BJ (cell line): ENCODE measurements at regions of chr10 and their contacts with region 1.

Region 1: GRCh38 chr10:102476466-102477141 is 25.3 kb upstream of the C10orf95 start:
- DNase-seq: no peak
- H3K4me3 ChIP-seq: no peak overlapping the region
- H3K27me3 ChIP-seq: no peaks in the 10 kb centered on the region
- CTCF ChIP-seq: no peak

Region 2: DNA sequence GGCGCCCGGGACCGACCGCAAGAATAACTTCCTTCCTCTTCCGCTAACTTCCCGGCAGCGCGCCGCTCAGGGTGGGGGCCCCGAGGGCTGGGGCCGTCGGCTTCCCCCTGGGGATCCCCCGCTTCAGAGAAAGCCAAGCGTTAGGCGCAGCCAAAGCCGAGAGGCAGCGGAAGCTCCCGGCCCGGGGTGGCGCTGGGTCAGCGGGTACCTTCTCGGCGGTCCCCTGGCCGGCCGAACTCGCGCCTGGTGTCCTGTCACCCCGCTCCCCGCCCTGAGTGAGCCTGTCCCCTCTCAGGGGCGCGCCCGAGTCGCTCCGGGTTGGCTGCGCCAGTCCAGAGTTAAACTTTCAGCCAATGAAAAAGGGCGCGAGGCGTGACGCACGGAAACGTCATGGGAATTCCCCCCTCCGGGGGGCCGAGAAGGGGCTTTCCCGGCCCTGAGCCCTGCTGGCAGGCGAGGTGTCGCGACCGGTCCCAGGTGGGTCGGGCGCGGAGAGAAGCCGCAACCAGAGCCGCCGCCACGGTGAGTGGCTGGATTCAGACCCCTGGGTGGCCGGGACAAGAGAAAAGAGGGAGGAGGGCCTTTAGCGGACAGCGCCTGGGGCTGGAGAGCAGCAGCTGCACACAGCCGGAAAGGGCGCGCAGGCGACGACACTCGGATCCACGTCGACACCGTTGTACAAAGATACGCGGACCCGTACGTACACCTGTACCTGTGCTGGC is 82.4 kb before region 1 on chr10:
- CTCF ChIA-PET with region 1: interaction called, 32 read pairs
- POLR2A ChIA-PET with region 1: no interaction called
- DNase-seq: peak; percentile 51
- H3K4me3 ChIP-seq: peak overlapping the region; percentile 79
- H3K27me3 ChIP-seq: no peaks in the 10 kb centered on the region
- CTCF ChIP-seq: no peak; the same call in 1 of the 2 replicates

Region 3: GRCh38 chr10:102408728-102409603 is 67.6 kb before region 1 on chr10:
- CTCF ChIA-PET with region 1: interaction called, 14 read pairs
- POLR2A ChIA-PET with region 1: no interaction called
- DNase-seq: no peak
- H3K4me3 ChIP-seq: peak overlapping the region; percentile 21
- H3K27me3 ChIP-seq: peaks cover 48% of the 10 kb centered on the region
- CTCF ChIP-seq: no peak

Region 4: GRCh38 chr10:102461187-102462054 is 15.2 kb before region 1 on chr10:
- CTCF ChIA-PET with region 1: interaction called, 33 read pairs
- POLR2A ChIA-PET with region 1: no interaction called
- DNase-seq: no peak
- H3K4me3 ChIP-seq: peak overlapping the region; percentile 55
- H3K27me3 ChIP-seq: no peaks in the 10 kb centered on the region; the same call in 1 of the 2 replicates
- CTCF ChIP-seq: no peak